ENCODE measurements at regions of chr3 and their contacts with region 1.

Region 1: DNA sequence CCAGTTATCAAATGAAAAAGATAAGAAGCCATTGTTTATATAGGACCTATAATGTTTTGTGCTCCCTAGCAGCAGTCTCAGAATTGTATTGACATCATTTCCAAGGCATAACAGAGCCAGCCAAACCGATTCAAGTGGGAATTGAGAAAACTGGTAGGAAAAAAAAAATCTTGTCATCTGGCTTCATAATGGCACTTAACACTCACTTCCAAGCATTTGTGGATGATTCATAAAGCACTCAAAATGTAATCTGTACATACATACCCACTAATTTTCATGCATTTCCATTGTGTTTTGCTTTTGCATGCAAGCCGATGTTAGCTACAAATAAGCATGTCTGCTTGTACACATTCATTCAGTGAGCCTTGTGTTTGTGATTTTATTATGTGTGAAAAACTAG is 18.6 kb upstream of the TRPC1 start:
- DNase-seq: peak; percentile 20
- H3K4me3 ChIP-seq: peak overlapping the region in 1 of 2 experiments; percentile 1; a peak in 1 of 4 replicates
- H3K27ac ChIP-seq: peak overlapping the region in 1 of 2 experiments; percentile 34; a peak in 2 of 4 replicates
- H3K4me1 ChIP-seq: no peaks in the 10 kb centered on the region; a peak in 2 of 4 replicates
- H3K27me3 ChIP-seq: no peaks in the 10 kb centered on the region
- CTCF ChIP-seq: no peak
- EP300 ChIP-seq: no peak
- RAD21 ChIP-seq: no peak

Region 2: DNA sequence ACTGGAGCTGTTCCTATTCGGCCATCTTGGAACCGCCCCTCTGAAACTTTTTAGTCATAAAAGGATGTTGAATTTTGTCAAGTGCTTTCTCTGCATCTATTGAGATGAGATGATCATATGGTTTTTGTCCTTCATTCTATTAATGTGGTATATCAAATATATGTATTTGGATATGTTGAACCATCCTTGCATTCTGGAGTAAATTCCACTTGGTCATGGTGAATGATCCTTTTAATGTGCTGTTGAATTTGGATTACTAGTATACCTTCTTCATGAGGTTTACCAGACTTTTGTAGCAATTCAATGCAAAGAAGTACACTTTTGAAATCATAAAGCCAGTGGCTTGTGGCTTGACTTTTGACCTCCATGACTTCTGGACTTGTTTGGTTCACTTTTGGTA is 224.0 kb before region 1 on chr3:
- CTCF ChIA-PET with region 1: no interaction called
- POLR2A ChIA-PET with region 1: no interaction called
- DNase-seq: no peak
- H3K4me3 ChIP-seq: no peak overlapping the region; a peak in 1 of 4 replicates
- H3K27ac ChIP-seq: no peak overlapping the region
- H3K4me1 ChIP-seq: no peaks in the 10 kb centered on the region
- H3K27me3 ChIP-seq: no peaks in the 10 kb centered on the region
- CTCF ChIP-seq: no peak
- EP300 ChIP-seq: no peak
- RAD21 ChIP-seq: no peak

Region 3: DNA sequence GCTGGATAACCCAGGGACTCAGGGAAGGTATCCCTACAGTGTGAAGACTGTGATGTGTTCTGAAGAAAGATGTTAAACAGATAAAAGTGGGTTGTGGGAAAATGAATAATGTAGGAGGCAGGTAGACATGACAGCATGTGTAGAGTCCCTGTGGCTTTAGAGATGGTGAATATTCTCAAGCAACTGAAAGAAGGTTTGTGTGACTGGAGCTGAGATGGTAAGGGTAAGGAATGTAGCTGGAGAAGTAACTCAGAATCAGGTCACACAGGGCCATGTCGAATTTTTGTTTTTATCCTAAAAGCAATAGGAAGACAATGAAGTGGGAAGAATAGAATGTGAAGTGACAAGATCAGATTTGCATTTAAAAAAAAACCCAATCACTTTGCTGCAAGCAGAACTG is 35.1 kb before region 1 on chr3:
- CTCF ChIA-PET with region 1: no interaction called
- POLR2A ChIA-PET with region 1: no interaction called
- DNase-seq: no peak
- H3K4me3 ChIP-seq: no peak overlapping the region
- H3K27ac ChIP-seq: no peak overlapping the region
- H3K4me1 ChIP-seq: no peaks in the 10 kb centered on the region
- H3K27me3 ChIP-seq: no peaks in the 10 kb centered on the region
- CTCF ChIP-seq: no peak
- EP300 ChIP-seq: no peak
- RAD21 ChIP-seq: no peak

Region 4: DNA sequence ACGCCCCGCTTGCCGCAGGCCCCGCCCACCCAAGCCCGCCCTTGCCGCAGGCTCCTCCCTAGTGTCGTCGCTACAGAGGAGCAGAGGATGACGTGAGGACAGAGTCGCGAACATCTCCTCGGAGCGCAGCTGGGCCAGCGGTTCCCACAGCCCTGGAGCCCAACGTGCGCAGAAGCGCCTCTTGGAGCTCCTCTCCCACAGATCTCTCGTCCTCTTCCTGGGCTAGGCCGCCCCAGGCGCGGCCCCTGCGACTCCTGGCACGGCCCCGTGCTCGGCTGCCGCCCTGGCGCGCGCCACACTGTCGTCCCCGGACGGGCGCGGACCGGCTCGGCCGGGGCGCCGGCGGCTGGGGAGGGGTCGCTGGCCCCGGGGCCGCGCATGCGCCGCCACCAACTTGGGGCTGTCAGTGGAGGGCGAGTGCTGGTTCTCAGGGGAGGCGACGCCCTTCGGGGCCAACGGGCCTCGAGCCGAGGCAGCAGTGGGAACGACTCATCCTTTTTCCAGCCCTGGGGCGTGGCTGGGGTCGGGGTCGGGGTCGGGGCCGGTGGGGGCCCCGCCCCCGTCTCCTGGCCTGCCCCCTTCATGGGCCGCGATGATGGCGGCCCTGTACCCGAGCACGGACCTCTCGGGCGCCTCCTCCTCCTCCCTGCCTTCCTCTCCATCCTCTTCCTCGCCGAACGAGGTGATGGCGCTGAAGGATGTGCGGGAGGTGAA is 18.9 kb after region 1 on chr3 and contains the start of gene TRPC1:
- CTCF ChIA-PET with region 1: interaction called, 12 read pairs
- POLR2A ChIA-PET with region 1: interaction called, 3 read pairs
- DNase-seq: peak; percentile 95
- H3K4me3 ChIP-seq: peak within 1 kb of the TSS; percentile 96 to 99
- H3K27ac ChIP-seq: peak within 1 kb of the TSS; percentile 74 to 94
- H3K4me1 ChIP-seq: peaks cover 0 to 2% of the 10 kb centered on the region in 2 experiments; a peak in 1 of 4 replicates
- H3K27me3 ChIP-seq: no peaks in the 10 kb centered on the region
- CTCF ChIP-seq: no peak
- EP300 ChIP-seq: no peak
- RAD21 ChIP-seq: no peak
- polyA plus RNA-seq, gene TRPC1: 9.6 and 13.4 TPM in 2 replicates